Calu3 (cell line): ENCODE measurements at regions of chr12 and their contacts with region 1.

Region 1: GRCh38 chr12:50986966-50987737 is 34.8 kb downstream of the HIGD1C start:
- DNase-seq: peak; percentile 27
- H3K4me3 Mint-ChIP-seq: no peak overlapping the region
- H3K27ac Mint-ChIP-seq: no peak overlapping the region
- H3K4me1 Mint-ChIP-seq: no peaks in the 10 kb centered on the region
- H3K27me3 Mint-ChIP-seq: no peaks in the 10 kb centered on the region
- CTCF ChIP-seq: peak; percentile 15

Region 2: DNA sequence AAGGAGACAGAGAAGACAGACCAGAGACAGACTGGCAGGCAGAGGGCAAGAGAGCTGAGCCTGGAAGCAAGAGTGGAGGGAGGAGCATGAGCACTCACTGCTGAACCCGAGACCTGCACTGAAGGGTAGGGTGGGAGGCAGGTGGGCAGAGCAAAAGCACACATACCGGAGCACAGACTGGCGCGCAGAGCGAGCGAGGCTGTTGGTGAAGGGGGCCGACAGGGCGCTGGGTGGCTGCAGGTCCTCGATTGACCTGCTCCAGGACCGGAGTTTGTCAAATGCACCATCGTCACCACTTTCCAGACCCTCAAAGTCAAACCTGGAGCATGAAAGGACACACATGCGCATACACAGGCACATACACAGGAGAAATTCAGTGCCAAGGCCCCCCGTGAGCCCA is 1328.9 kb before region 1 on chr12:
- CTCF ChIA-PET with region 1: interaction called, 12 read pairs
- intact Hi-C with region 1: no loop called
- DNase-seq: no peak
- H3K4me3 Mint-ChIP-seq: no peak overlapping the region
- H3K27ac Mint-ChIP-seq: no peak overlapping the region
- H3K4me1 Mint-ChIP-seq: no peaks in the 10 kb centered on the region
- H3K27me3 Mint-ChIP-seq: no peaks in the 10 kb centered on the region
- CTCF ChIP-seq: no peak

Region 3: DNA sequence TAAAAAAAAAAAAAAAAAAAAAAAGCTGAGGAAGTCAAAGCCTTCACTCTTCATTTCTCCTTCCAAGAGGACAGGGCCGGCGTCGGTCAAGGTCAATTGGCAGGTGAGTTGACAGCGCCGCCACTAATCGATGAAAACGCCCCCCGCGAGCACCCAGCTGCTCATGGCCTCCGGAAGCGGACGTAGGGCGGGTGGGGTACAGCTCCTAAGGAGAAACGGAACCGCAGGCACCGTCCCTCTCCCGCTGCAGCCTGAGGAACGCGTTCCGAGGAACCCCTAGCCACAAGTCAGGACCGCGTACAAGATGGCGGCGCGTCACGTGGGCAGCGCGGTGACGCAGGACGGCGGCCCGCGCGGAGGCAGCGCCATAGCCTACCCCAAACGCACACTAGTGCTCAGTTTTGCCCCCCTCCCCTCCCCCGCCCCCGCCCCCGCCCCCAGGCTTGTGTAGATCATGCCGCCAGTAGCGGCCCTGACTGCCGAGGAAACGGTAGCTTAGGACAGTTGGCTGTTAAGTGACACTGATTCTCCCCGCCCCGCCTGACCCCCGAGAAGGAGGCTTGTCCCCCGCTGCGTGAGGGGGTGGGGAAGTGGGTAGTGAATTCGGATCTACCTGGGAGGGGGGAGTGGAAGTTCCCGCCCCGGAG is 223.4 kb before region 1 on chr12 and contains the start of gene ATF1:
- CTCF ChIA-PET with region 1: interaction called, 10 read pairs
- intact Hi-C with region 1: no loop called
- DNase-seq: peak; percentile 84
- H3K4me3 Mint-ChIP-seq: peak within 1 kb of the TSS; percentile 83
- H3K27ac Mint-ChIP-seq: peak within 1 kb of the TSS; percentile 88
- H3K4me1 Mint-ChIP-seq: peaks cover 21% of the 10 kb centered on the region
- H3K27me3 Mint-ChIP-seq: no peaks in the 10 kb centered on the region
- CTCF ChIP-seq: no peak
- total RNA-seq, gene ATF1: 22.9 and 23.4 TPM in 2 replicates

Region 4: DNA sequence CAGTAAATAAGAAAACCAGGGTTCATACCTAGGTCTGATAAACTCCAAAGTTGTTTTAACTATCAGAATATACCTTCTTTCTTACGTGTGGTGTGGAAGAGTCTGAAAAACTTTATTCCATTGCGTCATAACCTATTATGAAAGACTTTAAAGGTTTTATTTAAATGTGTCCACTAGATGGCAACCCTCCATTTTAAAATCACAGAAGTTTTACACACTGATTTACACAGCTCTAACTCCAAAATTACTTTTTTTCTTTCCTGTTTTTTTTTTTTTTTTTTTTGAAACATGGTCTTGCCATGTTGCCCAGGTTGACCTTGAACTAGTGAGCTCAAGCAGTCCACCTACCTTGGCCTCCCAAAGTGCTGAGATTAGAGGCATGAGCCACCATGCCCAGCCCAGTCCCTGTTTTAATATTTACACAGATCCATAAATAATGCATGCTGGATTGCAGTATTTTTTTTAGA is 161.7 kb before region 1 on chr12:
- CTCF ChIA-PET with region 1: interaction called, 22 read pairs
- intact Hi-C with region 1: loop called (anchors 2 kb)
- DNase-seq: no peak
- H3K4me3 Mint-ChIP-seq: no peak overlapping the region
- H3K27ac Mint-ChIP-seq: peak overlapping the region; percentile 70
- H3K4me1 Mint-ChIP-seq: no peaks in the 10 kb centered on the region
- H3K27me3 Mint-ChIP-seq: no peaks in the 10 kb centered on the region
- CTCF ChIP-seq: peak; percentile 26

Region 5: DNA sequence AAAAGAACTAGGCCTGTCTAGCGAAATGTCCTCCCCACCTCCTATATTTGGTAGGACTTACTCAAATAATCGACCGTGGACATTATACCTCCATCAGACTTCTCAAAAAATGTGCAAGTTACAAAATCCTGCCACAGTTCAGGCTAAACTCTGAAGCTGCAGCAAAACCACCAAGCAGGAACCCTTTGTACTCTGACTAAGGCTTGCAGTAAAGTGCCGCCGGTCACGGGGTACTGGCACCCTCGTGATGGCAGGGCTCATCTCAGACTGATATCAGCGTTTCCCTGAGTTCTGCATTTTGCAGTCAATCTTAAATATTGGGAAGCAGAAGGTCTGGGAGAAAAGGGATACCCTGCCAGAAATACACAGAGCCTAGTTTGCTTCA is 21.9 kb after region 1 on chr12:
- CTCF ChIA-PET with region 1: no interaction called
- intact Hi-C with region 1: no loop called
- DNase-seq: no peak
- H3K4me3 Mint-ChIP-seq: no peak overlapping the region
- H3K27ac Mint-ChIP-seq: no peak overlapping the region
- H3K4me1 Mint-ChIP-seq: peaks cover 13% of the 10 kb centered on the region
- H3K27me3 Mint-ChIP-seq: no peaks in the 10 kb centered on the region
- CTCF ChIP-seq: no peak

Region 6: GRCh38 chr12:51025836-51026638 is 38.9 kb after region 1 on chr12 and contains the start of gene SLC11A2:
- CTCF ChIA-PET with region 1: interaction called, 12 read pairs
- intact Hi-C with region 1: no loop called
- DNase-seq: peak; percentile 93
- H3K4me3 Mint-ChIP-seq: peak within 1 kb of the TSS; percentile 88
- H3K27ac Mint-ChIP-seq: peak within 1 kb of the TSS; percentile 91
- H3K4me1 Mint-ChIP-seq: peaks cover 25% of the 10 kb centered on the region
- H3K27me3 Mint-ChIP-seq: no peaks in the 10 kb centered on the region
- CTCF ChIP-seq: no peak
- total RNA-seq, gene SLC11A2: 49.5 and 51.3 TPM in 2 replicates